ENCODE measurements at regions of chr16 and their contacts with region 1.

Region 1: GRCh38 chr16:31073968-31074813 is at the starts of genes ZNF646 and ZNF668:
- DNase-seq: peak; percentile 98 to 99 (median 99)
- ATAC-seq: peak; percentile 94 to 97 (median 96)
- H3K4me3 ChIP-seq: peak within 1 kb of the TSS; percentile 66 to 100 (median 84)
- H3K27ac ChIP-seq: peak within 1 kb of the TSS; percentile 87 to 99 (median 96)
- H3K4me1 ChIP-seq: peaks cover 3 to 39% (median 24%) of the 10 kb centered on the region in 12 donors
- H3K27me3 ChIP-seq: no peaks in the 10 kb centered on the region
- CTCF ChIP-seq: peak in 1 of 12 donors; percentile 8
- POLR2A ChIP-seq: peak in 1 of 2 donors; percentile 65
- total RNA-seq, gene ZNF646: 8.3 to 15.5 (median 10.3) TPM
- total RNA-seq, gene ZNF668: 3.5 to 11.4 (median 5.8) TPM

Region 2: DNA sequence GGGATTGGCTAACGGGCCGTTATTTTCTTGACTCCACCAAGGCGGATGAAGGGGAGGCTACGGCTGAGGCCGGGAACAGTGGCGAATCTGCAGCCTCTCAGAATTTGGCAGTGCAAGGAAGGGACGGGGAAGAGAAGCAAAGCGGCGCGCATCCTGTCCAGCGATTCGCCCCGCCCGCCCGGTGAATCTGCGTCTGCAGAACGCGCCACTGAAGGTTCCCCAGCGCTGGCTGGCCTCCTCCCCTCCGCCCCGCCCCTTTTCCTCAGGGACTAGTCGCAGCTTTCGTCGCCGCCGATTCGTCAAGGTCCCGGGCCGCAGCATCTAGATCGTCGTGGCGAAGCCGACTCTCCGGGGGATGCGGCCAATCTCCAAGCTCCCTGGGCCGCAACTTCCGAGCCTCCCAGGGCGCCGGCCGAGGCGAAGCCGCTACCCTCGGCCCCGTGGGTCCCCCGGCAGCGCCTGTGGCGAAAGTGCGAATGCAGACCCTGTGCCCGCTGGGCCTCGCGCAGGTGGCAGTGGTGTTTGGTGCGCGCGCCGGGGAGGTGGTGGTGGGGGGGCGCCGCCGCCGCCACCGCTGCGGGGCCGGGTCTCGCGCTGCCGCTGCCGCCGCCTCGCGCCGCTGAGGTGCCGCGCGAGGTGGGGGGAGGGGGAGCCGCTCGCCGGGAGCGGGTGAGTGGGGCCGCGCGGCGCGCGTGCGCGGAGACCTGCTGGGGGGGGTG is 116.6 kb before region 1 on chr16 and contains the start of gene SETD1A:
- intact Hi-C with region 1: loop called in 1 of 10 experiments (anchors 10 kb)
- DNase-seq: peak; percentile 98 to 99 (median 98)
- ATAC-seq: peak; percentile 90 to 96 (median 91)
- H3K4me3 ChIP-seq: peak within 1 kb of the TSS; percentile 37 to 93 (median 82)
- H3K27ac ChIP-seq: peak within 1 kb of the TSS; percentile 86 to 99 (median 98)
- H3K4me1 ChIP-seq: peaks cover 0 to 37% (median 24%) of the 10 kb centered on the region in 12 donors
- H3K27me3 ChIP-seq: no peaks in the 10 kb centered on the region
- CTCF ChIP-seq: peak in 1 of 12 donors; percentile 7
- POLR2A ChIP-seq: peak in 1 of 2 donors; percentile 44
- total RNA-seq, gene SETD1A: 4.6 to 12.1 (median 9.0) TPM

Region 3: GRCh38 chr16:31010585-31011325 is 63.4 kb before region 1 on chr16 and contains the start of gene STX1B:
- intact Hi-C with region 1: no loop called
- DNase-seq: peak in 1 of 5 donors; percentile 13
- ATAC-seq: no peak
- H3K4me3 ChIP-seq: peak within 1 kb of the TSS in 2 of 12 donors; percentile 9 to 15
- H3K27ac ChIP-seq: no peak within 1 kb of the TSS
- H3K4me1 ChIP-seq: peaks cover 0 to 5% (median 0%) of the 10 kb centered on the region in 12 donors
- H3K27me3 ChIP-seq: peaks cover 17 to 56% (median 44%) of the 10 kb centered on the region in 9 donors
- CTCF ChIP-seq: no peak
- POLR2A ChIP-seq: no peak
- total RNA-seq, gene STX1B: 0.20 to 2.1 (median 1.00) TPM

Region 4: DNA sequence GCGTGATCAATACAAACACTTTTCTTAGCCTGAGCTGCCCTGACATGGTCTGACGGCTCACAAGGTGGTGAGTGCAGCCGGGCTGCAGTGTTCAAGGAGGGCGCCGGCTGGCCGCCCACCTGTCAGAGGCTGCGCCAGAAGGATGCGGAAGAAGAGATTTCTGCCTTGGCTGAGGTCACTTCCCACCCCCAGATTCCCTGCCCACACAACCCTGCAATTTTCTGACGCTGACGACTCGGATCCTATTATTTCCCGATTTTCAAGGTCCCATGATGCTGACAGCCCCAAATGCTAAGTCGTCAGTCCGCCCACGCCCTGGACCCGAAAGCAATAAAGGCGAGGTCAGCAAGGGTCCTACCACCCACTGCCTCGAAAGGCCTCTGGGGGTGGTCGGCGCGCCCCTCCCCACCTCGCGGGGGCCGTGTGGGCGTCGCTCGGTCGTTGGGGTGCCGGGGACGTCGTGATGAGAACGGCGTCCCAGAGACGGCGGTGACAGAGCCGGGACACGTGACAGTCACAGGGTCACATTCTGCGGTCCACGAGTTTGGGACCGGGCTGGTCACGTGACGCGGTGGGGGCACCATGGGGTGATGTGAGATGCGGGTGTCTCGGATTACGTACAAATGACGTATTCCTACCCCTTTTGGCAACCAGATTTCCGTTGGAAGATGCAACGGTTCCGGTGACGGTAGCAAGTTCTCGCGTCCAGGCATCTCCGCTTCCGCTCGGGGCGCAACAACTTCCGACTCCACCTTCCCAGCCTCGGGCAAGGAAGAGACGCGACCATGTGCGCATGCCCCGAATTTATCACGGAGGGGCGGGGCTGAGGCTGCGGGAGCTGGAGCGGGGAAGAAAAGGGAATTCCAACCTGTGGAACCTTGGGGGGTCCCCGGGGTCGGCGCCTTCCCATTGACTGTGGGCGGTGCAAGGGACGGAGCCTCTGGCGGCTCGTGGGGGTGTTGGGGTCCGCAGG is 41.2 kb before region 1 on chr16 and contains the start of gene STX4:
- intact Hi-C with region 1: loop called in 9 of 10 experiments (anchors 1 to 5 kb)
- DNase-seq: peak; percentile 98 to 99 (median 98)
- ATAC-seq: peak; percentile 93 to 95 (median 94)
- H3K4me3 ChIP-seq: peak within 1 kb of the TSS; percentile 73 to 100 (median 90)
- H3K27ac ChIP-seq: peak within 1 kb of the TSS; percentile 91 to 99 (median 96)
- H3K4me1 ChIP-seq: peaks cover 4 to 31% (median 18%) of the 10 kb centered on the region in 12 donors
- H3K27me3 ChIP-seq: no peaks in the 10 kb centered on the region
- CTCF ChIP-seq: no peak
- POLR2A ChIP-seq: no peak
- total RNA-seq, gene STX4: 19.5 to 65.8 (median 39.7) TPM

Region 5: GRCh38 chr16:31117391-31118197 is 43.4 kb after region 1 on chr16 and contains the start of gene KAT8:
- intact Hi-C with region 1: loop called in 1 of 10 experiments (anchors 2 kb)
- DNase-seq: peak; percentile 98 to 99 (median 99)
- ATAC-seq: peak; percentile 90 to 97 (median 94)
- H3K4me3 ChIP-seq: peak within 1 kb of the TSS; percentile 41 to 97 (median 76)
- H3K27ac ChIP-seq: peak within 1 kb of the TSS; percentile 92 to 99 (median 96)
- H3K4me1 ChIP-seq: peaks cover 0 to 46% (median 32%) of the 10 kb centered on the region in 12 donors
- H3K27me3 ChIP-seq: no peaks in the 10 kb centered on the region
- CTCF ChIP-seq: no peak
- POLR2A ChIP-seq: peak; percentile 55 to 82
- total RNA-seq, gene KAT8: 52.8 to 79.8 (median 64.7) TPM

Region 6: DNA sequence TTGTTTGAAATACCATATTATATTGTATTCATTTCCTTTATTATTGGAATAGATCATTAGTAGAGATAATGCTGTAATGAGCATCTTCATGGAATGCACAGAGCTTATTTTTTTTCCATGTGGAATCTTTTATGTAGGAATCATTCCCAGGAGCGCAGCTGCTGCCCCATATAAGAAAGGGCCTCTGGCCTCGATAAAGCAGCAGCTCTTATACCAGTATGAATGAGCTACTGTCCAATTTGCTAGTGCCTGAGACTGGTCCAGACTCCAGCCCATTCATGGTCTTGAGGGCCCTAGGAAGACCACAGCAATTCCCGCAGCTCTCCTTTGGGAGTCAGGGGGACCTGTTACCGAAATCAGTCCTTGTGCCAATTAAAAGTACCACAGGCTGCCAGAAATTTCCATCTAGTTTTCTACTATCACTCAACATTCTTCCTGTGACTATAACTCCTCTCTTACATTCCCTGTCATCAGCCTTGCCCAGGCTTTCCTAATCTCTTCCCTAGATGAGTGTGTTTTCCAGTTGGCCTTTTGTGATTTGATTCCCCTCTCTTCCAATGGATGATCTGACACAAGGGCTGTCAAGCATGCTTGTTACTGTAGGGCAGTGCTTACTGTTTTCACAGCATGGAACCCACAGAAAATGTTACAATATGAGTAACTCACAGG is 366.5 kb after region 1 on chr16:
- intact Hi-C with region 1: loop called in 1 of 10 experiments (anchors 10 kb)
- DNase-seq: no peak
- ATAC-seq: no peak
- H3K4me3 ChIP-seq: no peak overlapping the region
- H3K27ac ChIP-seq: peak overlapping the region in 9 of 12 donors; percentile 17 to 80 (median 46)
- H3K4me1 ChIP-seq: peaks cover 0 to 29% (median 11%) of the 10 kb centered on the region in 12 donors
- H3K27me3 ChIP-seq: no peaks in the 10 kb centered on the region
- CTCF ChIP-seq: no peak
- POLR2A ChIP-seq: no peak

Measured in heart left ventricle (tissue), 16 donors.